ENCODE measurements at regions of chr16 and their contacts with region 1.

Region 1: DNA sequence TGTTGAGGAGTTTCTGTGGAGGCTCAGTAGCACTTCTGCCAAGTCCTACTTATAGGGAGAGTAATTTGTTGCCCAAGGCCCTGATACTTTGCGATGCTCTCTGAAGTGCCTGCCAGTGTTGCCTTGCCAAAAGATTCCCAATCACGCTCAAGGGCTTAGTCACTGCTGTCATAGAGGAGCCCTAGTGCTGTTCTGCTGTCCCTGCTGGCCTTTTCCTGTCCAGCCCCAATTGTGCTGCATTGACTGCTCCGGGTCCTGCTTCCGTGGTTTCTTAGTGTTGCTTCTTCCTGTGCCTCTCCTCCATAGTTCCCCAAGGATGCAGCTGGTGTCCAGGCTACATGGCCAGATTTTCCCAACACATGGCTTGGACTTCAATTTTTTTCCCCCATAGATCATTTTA is 13.9 kb downstream of the NUP93 start:
- DNase-seq: no peak
- ATAC-seq: peak; percentile 29
- H3K4me3 ChIP-seq: no peak overlapping the region
- H3K27ac ChIP-seq: no peak overlapping the region
- H3K4me1 ChIP-seq: peaks cover 48% of the 10 kb centered on the region
- H3K27me3 ChIP-seq: no peaks in the 10 kb centered on the region
- CTCF ChIP-seq: no peak
- EP300 ChIP-seq: no peak
- POLR2A ChIP-seq: no peak
- RAD21 ChIP-seq: no peak

Region 2: DNA sequence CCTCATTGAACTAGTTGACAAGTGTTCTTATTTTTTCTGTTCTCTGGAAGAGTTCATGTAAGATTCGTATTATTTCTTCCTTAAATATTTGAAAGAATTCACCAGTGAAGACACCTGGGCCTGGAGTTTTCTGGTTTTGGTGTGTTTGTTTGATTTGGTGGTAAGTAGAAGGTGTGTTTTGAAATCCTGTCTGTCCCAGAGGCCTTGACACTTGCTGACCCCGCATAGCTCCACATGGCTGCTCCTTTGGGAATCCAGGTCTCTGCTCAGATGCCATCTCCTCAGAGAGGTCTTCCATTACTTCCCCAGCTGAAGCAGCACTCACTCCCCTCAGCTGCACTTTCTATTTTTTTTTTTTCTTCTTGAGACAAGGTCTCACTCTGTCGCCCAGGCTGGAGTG is 19.6 kb before region 1 on chr16:
- CTCF ChIA-PET with region 1: no interaction called
- POLR2A ChIA-PET with region 1: no interaction called
- in situ Hi-C with region 1: no loop called
- intact Hi-C with region 1: loop called (anchors 1 kb)
- DNase-seq: peak; percentile 52
- ATAC-seq: peak; percentile 59
- H3K4me3 ChIP-seq: no peak overlapping the region
- H3K27ac ChIP-seq: no peak overlapping the region
- H3K4me1 ChIP-seq: peaks cover 22% of the 10 kb centered on the region
- H3K27me3 ChIP-seq: no peaks in the 10 kb centered on the region
- CTCF ChIP-seq: no peak
- EP300 ChIP-seq: peak in 1 of 2 experiments; percentile 51; a peak in 1 of 4 replicates
- POLR2A ChIP-seq: no peak
- RAD21 ChIP-seq: no peak

Region 3: DNA sequence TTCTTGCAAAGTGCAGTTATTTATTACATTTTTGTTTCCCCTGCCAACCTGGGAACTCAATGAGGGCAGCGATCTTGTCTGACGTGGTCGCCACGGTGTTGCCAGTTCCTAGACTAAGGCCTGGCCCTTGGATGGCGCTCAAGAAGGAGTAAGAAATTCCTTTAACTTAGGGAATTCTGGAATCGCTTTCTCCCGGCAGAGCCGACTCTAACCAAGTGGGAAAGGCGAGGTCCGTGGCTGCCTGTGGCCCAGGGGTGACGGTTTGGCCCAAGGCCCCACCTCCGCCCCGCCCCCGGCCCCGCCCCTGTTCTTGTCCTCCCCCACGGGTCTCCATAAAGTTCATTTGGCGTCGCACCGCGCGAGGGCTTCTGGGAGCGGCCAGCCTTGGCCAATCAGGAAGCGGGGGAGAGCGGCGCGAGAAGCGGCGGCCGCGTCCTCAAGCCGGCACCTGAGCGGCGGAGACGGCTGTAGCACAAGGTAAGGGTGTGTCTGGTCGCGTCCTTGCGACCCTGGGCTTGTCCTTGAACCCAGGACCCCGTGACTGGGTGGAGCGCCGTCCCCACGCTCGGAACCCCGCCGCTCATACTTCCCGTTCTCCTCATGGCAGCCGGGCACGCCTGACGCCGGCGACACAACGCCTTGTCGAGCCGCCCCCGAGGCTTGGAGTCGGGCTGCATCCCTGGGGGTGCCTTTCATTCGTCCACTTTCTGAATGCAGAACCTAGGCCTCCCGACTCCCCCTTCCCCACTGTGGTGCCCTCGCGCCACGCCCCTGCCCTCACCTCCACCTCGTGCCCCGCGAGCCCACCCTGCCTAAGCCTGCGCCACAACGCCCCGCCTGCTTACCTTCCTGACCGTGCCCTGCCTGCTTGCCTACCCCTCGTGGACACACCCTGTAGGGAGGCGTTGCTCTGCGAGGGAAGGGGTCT is 13.8 kb before region 1 on chr16 and contains the start of gene NUP93:
- CTCF ChIA-PET with region 1: no interaction called
- POLR2A ChIA-PET with region 1: no interaction called
- in situ Hi-C with region 1: no loop called
- intact Hi-C with region 1: loop called (anchors 1 kb)
- DNase-seq: peak; percentile 92
- ATAC-seq: peak; percentile 95
- H3K4me3 ChIP-seq: peak within 1 kb of the TSS; percentile 94 to 98 (median 97)
- H3K27ac ChIP-seq: peak within 1 kb of the TSS; percentile 76
- H3K4me1 ChIP-seq: peaks cover 55% of the 10 kb centered on the region
- H3K27me3 ChIP-seq: no peaks in the 10 kb centered on the region; a peak in 1 of 5 replicates
- CTCF ChIP-seq: no peak
- EP300 ChIP-seq: peak in 1 of 2 experiments; percentile 31; a peak in 1 of 4 replicates
- POLR2A ChIP-seq: peak; percentile 90 to 91
- RAD21 ChIP-seq: peak; percentile 63
- total RNA-seq, gene NUP93: 140 and 192 TPM in 2 replicates